A549 (cell line): ENCODE measurements at regions of chr2 and their contacts with region 1.

Region 1: DNA sequence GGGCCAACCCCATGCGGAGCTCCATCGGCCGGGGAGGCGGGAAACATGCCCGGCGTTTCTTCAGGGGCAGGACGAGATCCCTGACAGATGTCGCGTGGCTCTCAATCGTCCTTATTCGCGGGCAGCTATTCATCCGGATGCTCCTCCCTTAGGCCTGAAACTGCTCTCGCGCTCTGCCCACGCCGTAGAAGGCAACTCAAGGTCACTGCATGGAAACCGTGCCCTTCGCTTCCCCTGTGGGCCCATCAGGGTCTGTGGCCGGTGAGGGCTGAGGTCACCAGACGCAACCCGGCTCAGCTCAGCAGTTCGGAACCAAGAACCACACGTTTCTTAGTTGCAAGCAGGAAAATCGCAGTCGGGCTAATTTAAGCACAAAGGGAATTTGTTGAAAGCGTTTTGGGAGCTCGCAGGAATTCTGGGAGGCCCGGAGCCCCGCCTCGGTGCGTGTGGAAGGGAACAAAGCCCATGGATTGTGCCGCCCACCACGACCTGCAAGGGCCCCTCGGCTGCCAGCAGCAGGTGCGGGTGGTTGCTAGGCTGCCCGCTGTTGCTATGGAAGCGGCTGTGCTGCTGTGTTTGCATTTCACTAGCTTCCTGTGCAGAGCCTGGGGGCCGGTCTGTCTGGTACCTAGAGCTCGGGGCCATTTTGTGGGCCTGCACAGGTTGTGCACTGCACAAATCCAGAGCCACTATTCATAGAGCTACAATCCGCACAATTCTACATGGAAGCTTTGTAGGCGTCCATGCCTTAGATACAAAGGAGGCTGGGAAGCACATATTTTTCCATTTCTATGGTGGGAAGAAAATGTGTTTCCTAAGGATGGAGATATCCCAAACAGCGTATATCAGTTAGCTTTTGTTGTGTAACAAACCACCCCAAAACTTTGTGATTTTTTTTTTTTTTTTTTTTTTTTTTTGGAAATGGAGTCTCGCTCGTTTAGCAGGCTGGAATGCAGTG is 6.0 kb upstream of the ALLC start:
- DNase-seq: no peak
- ATAC-seq: no peak
- H3K4me3 ChIP-seq: no peak overlapping the region
- H3K27ac ChIP-seq: no peak overlapping the region
- H3K4me1 ChIP-seq: peaks cover 5% of the 10 kb centered on the region; the same call in 1 of the 3 replicates
- CTCF ChIP-seq: no peak
- EP300 ChIP-seq: no peak
- POLR2A ChIP-seq: no peak
- RAD21 ChIP-seq: no peak

Region 2: DNA sequence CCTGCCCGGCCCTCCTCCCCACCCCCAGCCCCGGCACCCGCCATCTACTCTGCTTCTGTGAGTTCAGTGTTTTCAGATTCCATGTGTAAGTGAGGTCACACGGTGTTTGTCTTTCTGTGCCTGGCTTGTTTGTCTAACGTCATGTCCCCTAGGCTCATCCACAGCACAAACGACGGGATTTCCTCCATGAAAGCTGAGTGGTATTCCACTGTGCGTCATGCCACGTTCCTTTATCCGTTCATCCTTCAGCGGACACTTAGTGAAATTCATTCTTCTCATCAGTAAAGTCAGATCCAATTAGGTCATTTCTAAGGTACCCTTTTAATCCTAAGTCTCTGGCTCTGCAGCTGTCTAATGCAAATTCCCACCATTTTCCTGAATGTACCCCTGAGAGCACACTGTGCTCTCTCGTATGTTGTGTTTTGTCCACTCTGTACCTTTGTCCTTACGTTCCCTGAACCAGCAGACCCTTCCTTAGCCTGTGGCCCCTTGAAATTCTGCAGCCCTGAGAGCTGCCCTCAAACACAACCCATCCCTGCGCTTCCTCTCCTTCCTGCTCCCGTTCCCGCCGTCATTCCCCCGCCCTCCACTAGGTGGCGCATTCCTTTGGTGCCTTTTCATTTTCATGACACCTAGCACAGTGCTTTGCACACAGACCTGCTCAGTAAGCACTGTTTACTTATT is 228.3 kb before region 1 on chr2:
- CTCF ChIA-PET with region 1: interaction called, 44 read pairs
- POLR2A ChIA-PET with region 1: no interaction called
- DNase-seq: peak; percentile 63 to 70
- ATAC-seq: peak; percentile 69 to 91
- H3K4me3 ChIP-seq: no peak overlapping the region
- H3K27ac ChIP-seq: no peak overlapping the region
- H3K4me1 ChIP-seq: no peaks in the 10 kb centered on the region
- CTCF ChIP-seq: peak; percentile 93
- EP300 ChIP-seq: no peak
- POLR2A ChIP-seq: no peak
- RAD21 ChIP-seq: peak; percentile 41 to 51; a peak in 4 of 5 replicates

Region 3: GRCh38 chr2:3461801-3462492 is 190.0 kb before region 1 on chr2:
- CTCF ChIA-PET with region 1: interaction called, 20 read pairs
- POLR2A ChIA-PET with region 1: no interaction called
- DNase-seq: peak; percentile 56 to 60
- ATAC-seq: peak in 1 of 2 experiments; percentile 41; a peak in 3 of 6 replicates
- H3K4me3 ChIP-seq: no peak overlapping the region
- H3K27ac ChIP-seq: no peak overlapping the region
- H3K4me1 ChIP-seq: peaks cover 17% of the 10 kb centered on the region
- CTCF ChIP-seq: peak; percentile 82
- EP300 ChIP-seq: no peak
- POLR2A ChIP-seq: no peak
- RAD21 ChIP-seq: peak; percentile 63 to 64

Region 4: GRCh38 chr2:3536682-3537632 is 115.0 kb before region 1 on chr2:
- CTCF ChIA-PET with region 1: interaction called, 14 read pairs
- POLR2A ChIA-PET with region 1: no interaction called
- DNase-seq: peak; percentile 72 to 81
- ATAC-seq: peak; percentile 87 to 92
- H3K4me3 ChIP-seq: peak overlapping the region; percentile 45
- H3K27ac ChIP-seq: peak overlapping the region; percentile 80 to 88
- H3K4me1 ChIP-seq: peaks cover 18% of the 10 kb centered on the region
- CTCF ChIP-seq: peak; percentile 43; the same call in 2 of the 3 replicates
- EP300 ChIP-seq: no peak
- POLR2A ChIP-seq: no peak
- RAD21 ChIP-seq: peak in 1 of 2 experiments; percentile 8; a peak in 1 of 5 replicates

Region 5: DNA sequence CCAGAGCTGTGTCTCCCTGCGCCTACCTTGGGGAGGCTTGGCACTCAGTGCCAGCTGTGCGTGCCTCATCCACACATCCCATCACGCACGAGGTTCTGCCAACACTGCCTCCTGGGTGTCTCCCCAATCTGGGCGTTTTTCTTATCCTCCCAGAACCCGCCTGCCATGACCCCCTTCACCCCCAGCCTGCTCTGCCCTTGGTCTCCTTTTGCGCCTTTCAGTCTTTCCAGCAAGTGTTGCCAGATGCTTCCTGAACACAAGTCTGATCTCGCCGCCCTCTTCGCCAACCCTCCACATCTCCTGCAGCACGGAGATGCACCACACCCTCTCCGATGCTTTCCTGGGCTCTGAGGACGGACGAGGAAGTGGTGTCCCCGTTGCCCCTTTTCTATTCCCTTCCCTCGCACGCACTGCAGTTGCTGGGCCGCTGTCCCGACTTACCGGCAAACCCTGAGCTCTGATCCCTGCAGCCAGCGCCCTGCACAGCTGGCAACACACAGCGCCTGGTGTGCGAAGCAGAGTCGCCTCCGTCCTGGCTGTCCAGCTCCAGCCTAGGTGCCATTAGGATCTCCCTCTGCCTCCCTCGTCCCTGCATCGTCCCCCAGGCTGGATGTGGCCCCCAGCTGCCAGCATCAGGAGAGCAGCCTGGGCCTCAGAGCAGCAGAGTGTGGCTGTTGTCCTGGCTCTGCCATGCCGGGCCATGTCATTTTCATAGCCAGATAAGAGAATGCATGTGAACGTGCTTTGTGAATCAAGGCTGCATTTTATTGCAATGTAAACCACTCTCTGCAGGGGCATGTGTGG is 16.6 kb before region 1 on chr2:
- CTCF ChIA-PET with region 1: interaction called, 28 read pairs
- POLR2A ChIA-PET with region 1: no interaction called
- DNase-seq: no peak
- ATAC-seq: peak; percentile 4 to 17; a peak in 2 of 6 replicates
- H3K4me3 ChIP-seq: no peak overlapping the region
- H3K27ac ChIP-seq: no peak overlapping the region
- H3K4me1 ChIP-seq: no peaks in the 10 kb centered on the region
- CTCF ChIP-seq: no peak
- EP300 ChIP-seq: no peak
- POLR2A ChIP-seq: no peak
- RAD21 ChIP-seq: no peak

Region 6: DNA sequence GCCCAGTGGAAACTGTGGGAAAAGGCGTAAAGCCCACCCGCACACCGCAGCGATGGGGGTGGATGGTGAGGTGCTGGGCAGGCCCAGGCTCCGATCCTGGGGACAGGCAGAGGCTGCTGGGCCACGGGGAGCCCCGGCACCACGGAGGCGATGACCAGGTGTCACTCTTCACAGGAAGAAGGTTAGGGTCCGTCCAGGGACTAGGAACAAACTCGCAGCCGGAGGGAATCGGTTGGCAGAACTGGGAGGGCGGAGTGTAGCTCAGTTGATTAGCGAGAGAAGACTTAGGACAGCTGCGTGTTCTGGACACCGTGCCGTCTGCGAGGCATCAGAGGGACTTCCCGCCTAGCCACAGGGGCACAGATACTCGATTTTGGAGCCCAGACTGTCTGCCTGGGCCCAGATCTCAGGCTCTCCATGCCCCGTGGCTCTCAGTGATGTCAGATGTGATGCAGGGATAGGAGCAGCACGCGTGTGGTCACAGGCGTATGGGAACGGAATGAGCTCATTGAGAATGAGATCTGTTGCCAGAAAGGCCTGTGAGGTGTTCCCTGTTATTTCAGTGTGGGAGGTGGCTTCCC is 10.0 kb before region 1 on chr2:
- CTCF ChIA-PET with region 1: interaction called, 28 read pairs
- POLR2A ChIA-PET with region 1: no interaction called
- DNase-seq: no peak
- ATAC-seq: peak in 1 of 2 experiments; percentile 11; a peak in 2 of 6 replicates
- H3K4me3 ChIP-seq: no peak overlapping the region
- H3K27ac ChIP-seq: no peak overlapping the region
- H3K4me1 ChIP-seq: no peaks in the 10 kb centered on the region
- CTCF ChIP-seq: no peak
- EP300 ChIP-seq: no peak
- POLR2A ChIP-seq: no peak
- RAD21 ChIP-seq: no peak

Region 7: GRCh38 chr2:3662239-3662638 is 10.3 kb after region 1 on chr2:
- CTCF ChIA-PET with region 1: interaction called, 11 read pairs
- POLR2A ChIA-PET with region 1: no interaction called
- DNase-seq: no peak
- ATAC-seq: no peak
- H3K4me3 ChIP-seq: no peak overlapping the region
- H3K27ac ChIP-seq: no peak overlapping the region
- H3K4me1 ChIP-seq: peaks cover 8% of the 10 kb centered on the region; the same call in 2 of the 3 replicates
- CTCF ChIP-seq: 0 out of 3 replicates have a peak, but pooled peaks have one; percentile 9
- EP300 ChIP-seq: no peak
- POLR2A ChIP-seq: no peak
- RAD21 ChIP-seq: no peak

Region 8: GRCh38 chr2:3674066-3674845 is 22.3 kb after region 1 on chr2:
- CTCF ChIA-PET with region 1: no interaction called
- POLR2A ChIA-PET with region 1: no interaction called
- DNase-seq: no peak
- ATAC-seq: no peak
- H3K4me3 ChIP-seq: no peak overlapping the region
- H3K27ac ChIP-seq: no peak overlapping the region
- H3K4me1 ChIP-seq: no peaks in the 10 kb centered on the region
- CTCF ChIP-seq: no peak
- EP300 ChIP-seq: no peak
- POLR2A ChIP-seq: no peak
- RAD21 ChIP-seq: no peak